GM10248 (cell line): ENCODE measurements at regions of chr11 and their contacts with region 1.

Region 1: DNA sequence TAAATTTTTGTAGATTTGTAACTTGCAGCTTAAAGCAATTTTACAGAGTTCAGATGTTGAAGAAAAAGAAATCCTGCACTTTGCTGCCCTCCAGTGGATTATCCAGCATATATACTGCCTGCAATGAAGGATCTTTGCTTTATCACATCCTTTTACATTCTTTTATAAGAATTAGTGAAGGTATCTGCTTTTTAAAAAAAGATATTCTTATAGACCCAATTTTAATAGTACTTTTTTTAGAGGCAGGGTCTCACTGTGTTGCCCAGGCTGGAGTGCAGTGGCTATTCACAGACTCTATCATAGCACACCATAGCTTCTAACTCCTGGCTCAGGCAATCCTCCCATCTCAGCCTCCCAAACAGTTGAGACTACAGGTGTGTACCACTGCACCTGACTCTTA is 60.7 kb downstream of the TTC17 start:
- DNase-seq: peak; percentile 18
- CTCF ChIP-seq: peak; percentile 64

Region 2: DNA sequence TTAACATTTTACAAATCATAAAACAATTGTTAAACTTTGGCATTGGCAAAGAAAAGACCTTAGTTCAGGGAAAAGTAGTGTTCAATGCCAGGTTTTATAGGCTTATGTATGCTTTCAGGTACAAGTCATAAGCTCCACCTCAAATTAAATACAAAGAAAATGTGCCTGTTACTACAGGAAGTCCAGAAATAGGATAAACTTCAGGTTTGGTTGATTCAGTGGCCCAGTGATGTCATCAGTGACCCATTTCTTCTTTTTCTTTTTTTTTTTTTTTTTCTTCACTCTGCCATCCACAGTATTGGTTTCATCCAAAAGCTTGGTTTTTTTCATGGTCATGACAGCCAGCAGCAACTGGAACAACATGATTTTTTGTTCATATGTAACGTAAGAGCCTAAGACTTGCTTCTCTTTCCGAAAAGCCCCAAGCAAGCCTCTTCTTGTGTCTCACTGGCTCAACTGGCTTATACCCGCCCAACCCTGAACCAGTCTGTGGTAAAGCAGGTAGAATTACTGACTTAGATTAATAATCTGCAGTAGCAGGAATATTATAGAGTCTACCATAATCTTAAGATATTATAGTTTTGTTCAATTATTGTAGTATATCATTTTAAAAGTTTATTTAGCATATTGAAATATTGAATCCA is 14.5 kb before region 1 on chr11:
- CTCF ChIA-PET with region 1: interaction called, 10 read pairs
- POLR2A ChIA-PET with region 1: no interaction called
- DNase-seq: no peak
- CTCF ChIP-seq: no peak

Region 3: DNA sequence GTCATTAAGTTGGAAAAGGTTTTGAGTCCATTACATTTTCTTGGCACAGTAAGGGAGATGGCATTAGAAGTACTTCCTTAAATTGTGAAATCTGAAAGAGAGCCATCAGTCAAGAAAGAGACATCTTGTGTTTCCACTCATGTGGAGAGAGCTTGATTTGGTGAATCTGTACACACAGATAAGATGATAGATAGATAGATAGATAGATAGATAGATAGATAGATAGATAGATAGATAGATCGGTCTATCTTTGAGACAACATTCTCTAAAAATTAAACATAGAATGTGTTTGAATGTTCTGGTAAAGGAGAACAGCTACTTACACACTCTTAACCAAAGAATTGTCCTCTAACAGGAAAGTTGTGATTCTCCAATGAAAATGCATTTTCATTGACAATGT is 15.4 kb after region 1 on chr11:
- CTCF ChIA-PET with region 1: interaction called, 21 read pairs
- POLR2A ChIA-PET with region 1: no interaction called
- DNase-seq: no peak
- CTCF ChIP-seq: no peak

Region 4: DNA sequence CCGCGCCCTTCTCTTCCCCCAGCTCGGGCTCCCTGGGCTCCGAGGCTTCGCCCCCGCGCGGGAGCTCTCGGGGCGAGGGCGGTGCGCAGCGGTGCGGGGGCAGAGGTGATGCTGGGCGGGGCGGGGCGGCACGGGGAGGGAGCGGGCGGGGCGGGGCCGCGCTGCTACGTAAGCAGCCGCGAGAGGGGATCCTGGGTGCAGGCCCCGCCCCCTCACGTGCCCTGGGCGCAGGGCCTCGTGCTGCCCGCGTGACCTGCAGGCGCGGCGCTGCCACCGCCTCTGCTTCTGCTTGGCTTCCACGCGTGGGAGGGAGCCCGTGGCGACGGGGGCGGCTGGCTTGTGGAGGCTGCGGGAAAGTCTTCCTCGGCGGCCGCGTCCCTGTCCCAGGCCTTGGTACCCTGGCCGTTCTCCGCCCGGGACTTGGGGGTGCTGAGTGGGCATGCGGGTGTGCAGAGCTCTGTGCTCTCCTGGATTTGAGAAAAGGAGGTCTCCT is 128.5 kb after region 1 on chr11:
- CTCF ChIA-PET with region 1: no interaction called
- POLR2A ChIA-PET with region 1: no interaction called
- DNase-seq: no peak
- CTCF ChIP-seq: no peak